CD4-positive, alpha-beta memory T cell (primary cell): ENCODE measurements at regions of chr7 and their contacts with region 1.

Region 1: DNA sequence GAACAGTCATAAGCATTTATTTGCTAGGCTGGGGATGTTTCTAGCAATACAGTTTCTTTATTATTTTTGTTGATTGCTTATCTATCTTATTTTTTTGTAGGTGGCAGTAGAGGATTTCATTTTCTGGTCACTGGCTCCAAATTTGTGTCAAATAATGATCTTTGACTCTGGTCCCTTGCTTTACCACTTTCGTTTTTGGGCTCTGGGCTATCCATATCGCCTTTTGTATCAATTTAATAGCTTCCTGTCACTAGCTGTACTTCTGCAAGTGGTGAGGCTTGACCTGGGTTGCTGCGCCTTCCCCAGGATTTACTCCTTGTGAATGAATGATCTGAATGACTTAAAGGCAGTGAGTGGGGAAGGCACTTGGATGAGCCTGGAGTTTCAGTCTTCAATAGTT is 48.4 kb downstream of the MDFIC start:
- DNase-seq: peak in 2 of 5 donors; percentile 14 to 16
- H3K4me3 ChIP-seq: no peak overlapping the region
- H3K4me3 Mint-ChIP-seq: peak overlapping the region; percentile 39 to 87 (median 72)
- H3K27ac ChIP-seq: peak overlapping the region; percentile 19
- H3K27ac Mint-ChIP-seq: peak overlapping the region; percentile 38 to 83 (median 67)
- H3K4me1 ChIP-seq: peaks cover 95% of the 10 kb centered on the region
- H3K4me1 Mint-ChIP-seq: peaks cover 73 to 95% (median 82%) of the 10 kb centered on the region in 4 donors
- H3K27me3 ChIP-seq: no peaks in the 10 kb centered on the region
- H3K27me3 Mint-ChIP-seq: no peaks in the 10 kb centered on the region

Region 2: GRCh38 chr7:113374955-113375354 is 1595.4 kb before region 1 on chr7:
- CTCF ChIA-PET with region 1: no interaction called
- POLR2A ChIA-PET with region 1: no interaction called
- intact Hi-C with region 1: no loop called
- DNase-seq: no peak
- H3K4me3 ChIP-seq: no peak overlapping the region
- H3K4me3 Mint-ChIP-seq: no peak overlapping the region
- H3K27ac ChIP-seq: no peak overlapping the region
- H3K27ac Mint-ChIP-seq: no peak overlapping the region
- H3K4me1 ChIP-seq: no peaks in the 10 kb centered on the region
- H3K4me1 Mint-ChIP-seq: no peaks in the 10 kb centered on the region
- H3K27me3 ChIP-seq: no peaks in the 10 kb centered on the region
- H3K27me3 Mint-ChIP-seq: no peaks in the 10 kb centered on the region

Region 3: DNA sequence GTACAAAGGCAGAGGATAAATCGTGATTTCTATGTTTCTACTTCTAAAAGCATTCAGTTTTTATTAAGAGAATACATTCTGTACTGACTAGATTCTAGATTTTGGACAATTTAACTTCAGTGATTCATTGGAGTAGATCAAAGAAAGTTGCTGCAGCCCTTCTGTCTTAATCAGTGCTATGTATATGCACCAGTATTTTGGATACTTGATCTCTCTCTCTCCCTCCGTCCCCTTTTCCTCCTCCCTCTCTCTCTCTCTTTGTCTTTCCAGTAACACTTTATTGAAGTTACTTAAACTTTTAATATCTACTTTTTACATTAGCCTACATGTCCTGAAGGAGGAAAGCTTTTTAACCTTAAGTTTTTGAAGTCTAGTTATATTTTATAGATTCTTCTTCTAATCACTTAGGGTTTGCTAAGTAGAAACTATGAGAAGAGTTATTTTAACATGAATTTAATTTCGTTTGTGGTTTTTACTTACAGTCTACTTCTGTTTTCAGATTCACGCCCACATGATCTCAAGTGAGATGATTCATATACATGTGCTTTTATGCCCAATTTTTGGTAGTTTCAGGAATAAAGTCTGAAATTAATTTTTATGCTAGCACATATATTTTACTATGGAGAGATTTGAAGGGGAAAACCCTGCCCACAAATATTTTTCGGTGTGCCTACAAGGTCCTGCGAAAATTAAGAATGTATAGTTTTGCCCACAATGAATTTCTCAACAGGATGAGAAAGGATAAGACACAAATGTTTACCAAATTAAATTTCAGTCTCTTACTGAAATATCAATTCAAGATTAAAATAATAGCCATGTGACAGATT is 39.3 kb before region 1 on chr7:
- CTCF ChIA-PET with region 1: no interaction called
- POLR2A ChIA-PET with region 1: no interaction called
- intact Hi-C with region 1: loop called (anchors 5 kb)
- DNase-seq: no peak
- H3K4me3 ChIP-seq: peak overlapping the region; percentile 54 to 62
- H3K4me3 Mint-ChIP-seq: peak overlapping the region in 2 of 8 donors; percentile 79 to 89
- H3K27ac ChIP-seq: peak overlapping the region; percentile 59
- H3K27ac Mint-ChIP-seq: peak overlapping the region in 4 of 7 donors; percentile 91 to 94 (median 92)
- H3K4me1 ChIP-seq: peaks cover 96% of the 10 kb centered on the region
- H3K4me1 Mint-ChIP-seq: peaks cover 12 to 52% (median 24%) of the 10 kb centered on the region in 4 donors
- H3K27me3 ChIP-seq: no peaks in the 10 kb centered on the region
- H3K27me3 Mint-ChIP-seq: no peaks in the 10 kb centered on the region

Region 4: DNA sequence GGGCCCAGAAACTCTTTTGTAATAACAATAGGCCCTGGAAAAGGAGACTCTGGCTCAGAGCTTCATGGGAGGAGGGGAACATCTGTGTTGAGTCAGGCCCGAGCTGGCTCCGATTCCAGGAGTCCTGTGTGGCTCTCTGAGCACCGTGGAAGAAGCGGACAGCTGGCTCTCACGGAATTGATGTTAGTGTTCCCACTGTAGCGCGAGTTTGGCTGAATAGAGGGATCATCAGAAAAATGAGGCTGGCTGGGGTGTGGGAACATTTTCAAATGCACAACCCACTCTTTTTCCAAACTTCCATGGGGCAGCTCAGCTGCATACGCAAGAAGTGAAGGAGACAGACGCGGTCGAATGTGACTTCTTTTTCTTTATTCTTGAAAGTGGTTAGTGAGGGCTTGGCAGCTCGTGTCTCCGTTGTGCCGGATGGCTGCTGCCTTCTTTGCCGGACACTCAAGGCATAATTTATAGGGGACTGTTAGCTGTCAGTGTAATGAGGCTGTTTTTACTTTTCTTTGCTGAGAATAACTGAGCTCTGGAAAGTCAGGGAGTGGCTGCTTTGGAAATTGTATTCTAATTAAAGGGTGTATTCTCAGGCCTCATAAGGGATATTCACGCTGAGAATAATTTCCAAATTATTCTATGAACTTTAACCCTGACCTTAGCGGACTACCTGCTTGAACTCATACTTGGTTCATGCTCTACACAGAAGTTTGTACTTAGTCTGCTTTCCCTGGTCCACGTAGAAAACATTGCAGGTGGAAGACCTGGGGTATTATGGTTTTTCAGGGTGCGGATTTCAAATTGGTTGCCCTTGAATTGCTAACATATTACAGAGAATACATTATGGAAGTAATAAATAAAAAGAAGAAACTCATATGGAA is 25.3 kb before region 1 on chr7:
- CTCF ChIA-PET with region 1: interaction called, 3 read pairs
- POLR2A ChIA-PET with region 1: no interaction called
- intact Hi-C with region 1: loop called (anchors 2 kb)
- DNase-seq: no peak
- H3K4me3 ChIP-seq: no peak overlapping the region
- H3K4me3 Mint-ChIP-seq: peak overlapping the region in 1 of 8 donors; percentile 27
- H3K27ac ChIP-seq: no peak overlapping the region
- H3K27ac Mint-ChIP-seq: peak overlapping the region in 5 of 7 donors; percentile 16 to 83 (median 36)
- H3K4me1 ChIP-seq: peaks cover 75% of the 10 kb centered on the region
- H3K4me1 Mint-ChIP-seq: peaks cover 72 to 94% (median 83%) of the 10 kb centered on the region in 4 donors
- H3K27me3 ChIP-seq: no peaks in the 10 kb centered on the region
- H3K27me3 Mint-ChIP-seq: no peaks in the 10 kb centered on the region